Activated CD8-positive, alpha-beta T cell treated with anti-CD3 and anti-CD28 coated beads for 36 hours (primary cell): ENCODE measurements at regions of chr16 and their contacts with region 1.

Region 1: GRCh38 chr16:68093816-68094613 is 8.8 kb downstream of the NFATC3 start:
- DNase-seq: peak; percentile 39
- ATAC-seq: peak; percentile 91
- H3K4me3 Mint-ChIP-seq: peak overlapping the region; percentile 37
- H3K27ac Mint-ChIP-seq: peak overlapping the region; percentile 88
- H3K4me1 Mint-ChIP-seq: peaks cover 74% of the 10 kb centered on the region
- H3K27me3 Mint-ChIP-seq: no peaks in the 10 kb centered on the region
- CTCF ChIP-seq: peak; percentile 76

Region 2: DNA sequence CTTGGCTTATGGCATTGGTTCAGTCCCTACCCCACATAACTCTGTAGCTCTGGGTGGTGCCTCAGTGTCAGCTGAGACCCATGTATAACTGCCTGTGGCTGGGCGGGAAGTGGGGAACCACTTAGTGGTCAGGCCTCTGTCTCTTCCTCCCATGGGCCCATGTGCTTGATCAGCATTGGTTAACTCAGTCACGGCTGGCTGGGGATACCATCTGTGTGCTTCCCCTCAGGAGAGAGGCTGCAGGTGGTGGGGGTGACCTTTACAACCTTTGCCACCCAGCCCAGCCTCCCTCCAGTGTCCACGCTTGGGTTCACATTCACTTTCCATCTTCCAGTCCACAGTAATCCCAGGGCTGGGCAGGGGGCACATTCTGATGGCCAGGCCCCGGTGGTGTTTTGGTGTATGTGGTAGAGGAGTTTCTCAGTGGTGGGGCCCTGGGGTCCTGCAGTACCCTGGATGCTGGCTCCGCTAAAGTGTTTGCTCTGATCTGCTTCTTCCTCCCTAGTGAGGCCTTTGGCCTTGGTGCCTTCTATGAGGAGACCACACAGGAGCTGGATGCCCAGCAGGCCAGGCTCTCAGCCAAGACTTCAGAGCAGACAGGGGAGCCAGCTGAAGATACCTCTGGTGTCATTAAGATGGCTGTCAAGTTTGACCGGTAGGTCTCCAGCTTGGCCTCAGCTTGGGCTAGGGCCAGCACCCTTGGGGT is 19.0 kb before region 1 on chr16:
- CTCF ChIA-PET with region 1: interaction called, 11 read pairs
- POLR2A ChIA-PET with region 1: no interaction called
- intact Hi-C with region 1: no loop called
- DNase-seq: peak; percentile 95
- ATAC-seq: peak; percentile 60
- H3K4me3 Mint-ChIP-seq: peak overlapping the region; percentile 32
- H3K27ac Mint-ChIP-seq: peak overlapping the region; percentile 95
- H3K4me1 Mint-ChIP-seq: peaks cover 80% of the 10 kb centered on the region
- H3K27me3 Mint-ChIP-seq: no peaks in the 10 kb centered on the region
- CTCF ChIP-seq: no peak

Region 3: DNA sequence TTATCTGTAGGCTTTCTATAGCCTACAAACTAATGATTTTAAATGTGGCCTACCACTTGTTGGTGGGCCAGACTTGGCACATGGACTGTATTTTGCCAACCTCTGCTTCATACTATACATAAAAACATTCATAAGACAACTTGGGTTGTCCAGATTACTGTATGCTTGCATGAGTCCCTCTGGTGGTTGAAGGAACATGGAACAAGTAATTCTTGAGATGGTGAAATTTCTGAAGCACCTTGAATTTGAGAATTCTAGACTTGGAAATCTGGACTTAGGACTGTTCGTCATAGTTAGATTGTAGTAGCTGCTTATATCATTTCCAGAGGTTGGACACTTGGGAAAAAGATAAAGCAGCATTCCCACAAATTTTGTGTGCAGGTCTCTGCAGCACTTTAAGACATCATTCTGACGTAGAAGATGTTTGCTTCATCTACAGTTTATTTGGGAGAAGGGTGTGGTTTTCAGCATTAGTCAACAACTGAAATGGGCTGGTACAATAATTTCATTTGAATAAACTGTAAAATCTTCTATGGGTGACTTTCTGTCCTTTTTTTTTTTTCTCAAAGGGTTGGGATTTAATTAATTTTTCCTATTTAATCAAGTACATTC is 22.3 kb after region 1 on chr16:
- CTCF ChIA-PET with region 1: interaction called, 46 read pairs
- POLR2A ChIA-PET with region 1: interaction called, 4 read pairs
- intact Hi-C with region 1: no loop called
- DNase-seq: no peak
- ATAC-seq: peak; percentile 54
- H3K4me3 Mint-ChIP-seq: no peak overlapping the region
- H3K27ac Mint-ChIP-seq: peak overlapping the region; percentile 25
- H3K4me1 Mint-ChIP-seq: peaks cover 84% of the 10 kb centered on the region
- H3K27me3 Mint-ChIP-seq: no peaks in the 10 kb centered on the region
- CTCF ChIP-seq: peak; percentile 67

Region 4: DNA sequence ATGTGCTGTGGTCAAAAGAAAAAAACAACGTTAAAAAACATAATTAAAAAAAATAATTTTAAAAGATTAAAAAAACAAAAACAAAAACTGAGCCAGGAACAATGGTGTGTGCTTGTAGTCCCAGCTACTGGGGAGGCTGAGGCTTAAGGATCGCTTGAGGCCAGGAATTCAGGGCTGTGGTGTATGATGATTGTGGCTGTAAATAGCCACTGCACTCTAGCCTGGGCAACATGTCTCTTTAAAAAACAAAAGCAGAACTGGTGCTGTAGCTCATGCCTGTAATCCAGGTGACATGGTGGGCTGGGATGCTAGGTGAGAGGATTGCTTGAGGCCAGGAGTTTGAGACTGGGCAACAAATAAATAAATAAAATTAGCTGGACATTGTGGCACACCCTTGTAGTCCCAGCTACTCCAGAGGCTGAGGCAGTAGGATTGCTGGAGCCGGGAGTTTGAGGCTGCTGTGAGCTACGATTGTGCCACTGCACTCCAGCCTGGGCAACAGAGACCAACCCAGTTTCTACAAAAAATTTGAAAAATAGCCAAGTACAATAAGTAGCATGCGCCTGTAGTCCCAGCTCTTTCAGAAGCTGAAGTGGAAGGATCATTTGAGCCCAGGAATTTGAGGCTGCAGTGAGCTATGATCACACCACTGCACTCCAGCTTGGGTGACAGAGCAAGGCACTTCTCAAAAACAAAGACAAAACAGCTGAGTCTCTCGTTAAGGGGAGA is 34.7 kb after region 1 on chr16:
- CTCF ChIA-PET with region 1: interaction called, 6 read pairs
- POLR2A ChIA-PET with region 1: no interaction called
- intact Hi-C with region 1: loop called (anchors 5 kb)
- DNase-seq: no peak
- ATAC-seq: no peak
- H3K4me3 Mint-ChIP-seq: no peak overlapping the region
- H3K27ac Mint-ChIP-seq: peak overlapping the region; percentile 53
- H3K4me1 Mint-ChIP-seq: peaks cover 65% of the 10 kb centered on the region
- H3K27me3 Mint-ChIP-seq: no peaks in the 10 kb centered on the region
- CTCF ChIP-seq: no peak

Region 5: GRCh38 chr16:68144008-68144407 is 50.0 kb after region 1 on chr16:
- CTCF ChIA-PET with region 1: interaction called, 10 read pairs
- POLR2A ChIA-PET with region 1: no interaction called
- intact Hi-C with region 1: no loop called
- DNase-seq: no peak
- ATAC-seq: no peak
- H3K4me3 Mint-ChIP-seq: no peak overlapping the region
- H3K27ac Mint-ChIP-seq: no peak overlapping the region
- H3K4me1 Mint-ChIP-seq: peaks cover 54% of the 10 kb centered on the region
- H3K27me3 Mint-ChIP-seq: no peaks in the 10 kb centered on the region
- CTCF ChIP-seq: no peak

Region 6: GRCh38 chr16:68229431-68230198 is 135.6 kb after region 1 on chr16:
- CTCF ChIA-PET with region 1: interaction called, 21 read pairs
- POLR2A ChIA-PET with region 1: interaction called, 4 read pairs
- intact Hi-C with region 1: loop called (anchors 2 kb)
- DNase-seq: peak; percentile 64
- ATAC-seq: no peak
- H3K4me3 Mint-ChIP-seq: no peak overlapping the region
- H3K27ac Mint-ChIP-seq: peak overlapping the region; percentile 75
- H3K4me1 Mint-ChIP-seq: peaks cover 50% of the 10 kb centered on the region
- H3K27me3 Mint-ChIP-seq: no peaks in the 10 kb centered on the region
- CTCF ChIP-seq: peak; percentile 88